Activated CD4-positive, alpha-beta T cell treated with anti-CD3 and anti-CD28 coated beads for 36 hours (primary cell): ENCODE measurements at regions of chr19 and their contacts with region 1.

Region 1: DNA sequence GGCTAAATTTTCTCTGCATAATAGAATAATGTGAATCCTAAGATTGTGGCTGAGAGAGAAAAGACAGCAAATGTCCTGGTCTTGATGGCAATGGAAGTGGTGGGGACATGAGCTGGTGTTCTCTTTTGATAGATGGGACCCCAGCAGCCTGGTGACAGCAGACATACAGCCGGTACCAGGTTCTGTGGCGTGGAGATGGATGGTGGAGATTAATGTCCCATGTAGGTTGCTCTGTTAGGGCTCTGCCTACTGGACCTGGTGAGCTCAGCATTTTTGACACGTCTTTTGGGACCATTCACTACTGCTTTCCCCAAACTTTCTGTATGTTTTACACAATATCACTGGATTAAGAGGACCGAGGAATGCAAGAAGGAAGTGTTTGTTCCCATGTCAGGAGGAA is 8.2 kb upstream of the SIGLEC14 start:
- DNase-seq: no peak
- ATAC-seq: no peak
- H3K4me3 Mint-ChIP-seq: no peak overlapping the region
- H3K27ac Mint-ChIP-seq: no peak overlapping the region
- H3K4me1 Mint-ChIP-seq: peaks cover 5% of the 10 kb centered on the region
- H3K27me3 Mint-ChIP-seq: peaks cover 26% of the 10 kb centered on the region

Region 2: GRCh38 chr19:51607920-51608562 is 46.7 kb before region 1 on chr19:
- CTCF ChIA-PET with region 1: interaction called, 4 read pairs
- POLR2A ChIA-PET with region 1: no interaction called
- intact Hi-C with region 1: loop called (anchors 2 to 5 kb)
- DNase-seq: peak; percentile 88
- ATAC-seq: peak; percentile 37
- H3K4me3 Mint-ChIP-seq: no peak overlapping the region
- H3K27ac Mint-ChIP-seq: no peak overlapping the region
- H3K4me1 Mint-ChIP-seq: peaks cover 21% of the 10 kb centered on the region
- H3K27me3 Mint-ChIP-seq: peaks cover 36% of the 10 kb centered on the region

Region 3: DNA sequence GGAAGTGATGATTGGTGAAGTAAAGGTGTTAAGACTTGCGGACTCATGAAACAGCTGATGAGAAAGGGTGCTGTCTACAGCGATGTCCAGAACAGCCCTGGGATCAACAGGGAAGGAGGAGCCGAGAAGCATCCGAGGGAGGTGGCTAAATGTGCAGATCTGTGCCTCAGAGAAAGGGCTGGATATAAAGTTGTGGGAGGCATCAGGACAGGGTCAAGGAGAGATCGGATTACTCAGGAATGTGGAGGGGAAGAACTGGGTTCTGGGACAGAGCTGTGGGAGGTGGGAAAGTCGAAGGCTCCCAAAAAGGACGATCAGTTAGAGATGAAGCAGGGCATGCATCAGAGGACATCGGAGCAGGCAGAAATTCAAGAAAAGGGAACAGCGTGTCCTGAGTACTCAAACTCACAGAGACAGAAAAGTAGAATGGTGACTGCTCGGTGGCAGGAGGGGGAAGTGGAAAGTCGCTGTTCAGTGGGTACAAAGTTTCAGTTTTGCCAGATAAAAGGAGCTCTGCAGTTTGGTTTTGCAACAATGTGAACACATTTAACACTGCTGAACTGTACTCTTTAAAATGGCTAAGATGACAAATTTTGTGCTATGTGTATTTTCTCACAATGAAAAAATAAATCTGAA is 10.0 kb before region 1 on chr19:
- CTCF ChIA-PET with region 1: interaction called, 15 read pairs
- POLR2A ChIA-PET with region 1: interaction called, 9 read pairs
- intact Hi-C with region 1: no loop called
- DNase-seq: no peak
- ATAC-seq: no peak
- H3K4me3 Mint-ChIP-seq: no peak overlapping the region
- H3K27ac Mint-ChIP-seq: no peak overlapping the region
- H3K4me1 Mint-ChIP-seq: no peaks in the 10 kb centered on the region
- H3K27me3 Mint-ChIP-seq: peaks cover 37% of the 10 kb centered on the region